A549 (cell line): ENCODE measurements at regions of chr20 and their contacts with region 1.

Region 1: DNA sequence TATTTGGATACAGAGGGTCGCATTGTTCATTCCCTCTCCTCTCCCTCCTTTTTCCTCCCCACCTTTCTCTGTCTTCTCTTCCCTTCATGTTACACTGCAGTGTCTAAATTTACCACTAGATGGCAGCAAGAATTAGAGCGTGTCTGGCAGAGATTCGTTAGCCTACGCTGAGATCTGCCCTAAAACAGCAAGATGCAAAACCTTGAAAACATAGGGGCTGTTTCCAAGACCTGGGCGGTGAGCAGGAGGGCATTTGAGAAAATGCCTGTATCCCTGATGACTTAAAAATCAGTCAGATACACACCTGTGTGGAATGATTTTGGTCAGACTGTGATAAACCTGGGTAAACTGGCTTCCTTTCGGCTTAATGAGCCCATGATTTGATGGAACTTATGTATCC is 101.5 kb upstream of the ISM1 start:
- DNase-seq: peak; percentile 29 to 70
- ATAC-seq: peak; percentile 86 to 97
- H3K4me3 ChIP-seq: no peak overlapping the region
- H3K27ac ChIP-seq: no peak overlapping the region
- H3K4me1 ChIP-seq: no peaks in the 10 kb centered on the region
- CTCF ChIP-seq: peak; percentile 94
- EP300 ChIP-seq: no peak
- POLR2A ChIP-seq: no peak
- RAD21 ChIP-seq: peak; percentile 95 to 98

Region 2: GRCh38 chr20:12815231-12815768 is 304.3 kb before region 1 on chr20:
- CTCF ChIA-PET with region 1: no interaction called
- POLR2A ChIA-PET with region 1: no interaction called
- DNase-seq: no peak
- ATAC-seq: no peak
- H3K4me3 ChIP-seq: no peak overlapping the region
- H3K27ac ChIP-seq: no peak overlapping the region
- H3K4me1 ChIP-seq: no peaks in the 10 kb centered on the region
- CTCF ChIP-seq: no peak
- EP300 ChIP-seq: no peak
- POLR2A ChIP-seq: no peak
- RAD21 ChIP-seq: no peak

Region 3: DNA sequence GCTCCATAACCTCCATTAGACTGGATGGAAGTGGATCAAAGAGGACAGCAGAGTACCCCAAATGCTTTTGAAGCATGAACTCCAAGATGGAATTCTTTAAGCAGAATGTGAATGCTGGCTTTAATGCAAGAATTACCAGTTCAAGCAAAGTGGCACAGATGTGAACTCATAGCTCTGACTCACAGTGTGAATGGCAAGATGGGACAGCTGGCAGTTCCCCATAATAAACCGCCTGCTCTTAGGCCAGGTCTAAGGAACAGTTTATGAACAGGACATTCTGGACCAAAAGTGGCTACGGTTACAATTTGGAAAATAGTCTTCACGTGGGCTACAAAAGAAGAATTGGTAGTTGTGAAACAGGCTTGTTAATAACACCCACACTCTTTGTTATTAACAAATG is 34.3 kb before region 1 on chr20:
- CTCF ChIA-PET with region 1: no interaction called
- POLR2A ChIA-PET with region 1: no interaction called
- DNase-seq: no peak
- ATAC-seq: no peak
- H3K4me3 ChIP-seq: no peak overlapping the region
- H3K27ac ChIP-seq: no peak overlapping the region
- H3K4me1 ChIP-seq: no peaks in the 10 kb centered on the region
- CTCF ChIP-seq: no peak
- EP300 ChIP-seq: no peak
- POLR2A ChIP-seq: no peak
- RAD21 ChIP-seq: no peak

Region 4: GRCh38 chr20:13261460-13262301 is 142.1 kb after region 1 on chr20:
- CTCF ChIA-PET with region 1: interaction called, 11 read pairs
- POLR2A ChIA-PET with region 1: no interaction called
- DNase-seq: peak; percentile 62 to 75
- ATAC-seq: peak; percentile 94 to 99
- H3K4me3 ChIP-seq: no peak overlapping the region
- H3K27ac ChIP-seq: no peak overlapping the region
- H3K4me1 ChIP-seq: peaks cover 14% of the 10 kb centered on the region; the same call in 2 of the 3 replicates
- CTCF ChIP-seq: peak; percentile 74
- EP300 ChIP-seq: no peak
- POLR2A ChIP-seq: no peak
- RAD21 ChIP-seq: peak; percentile 69 to 72

Region 5: GRCh38 chr20:13302647-13303450 is 183.3 kb after region 1 on chr20:
- CTCF ChIA-PET with region 1: interaction called, 11 read pairs
- POLR2A ChIA-PET with region 1: no interaction called
- DNase-seq: peak; percentile 44 to 55
- ATAC-seq: peak; percentile 91 to 98
- H3K4me3 ChIP-seq: no peak overlapping the region
- H3K27ac ChIP-seq: no peak overlapping the region
- H3K4me1 ChIP-seq: no peaks in the 10 kb centered on the region
- CTCF ChIP-seq: peak; percentile 53
- EP300 ChIP-seq: no peak
- POLR2A ChIP-seq: no peak
- RAD21 ChIP-seq: peak; percentile 58 to 70

Region 6: DNA sequence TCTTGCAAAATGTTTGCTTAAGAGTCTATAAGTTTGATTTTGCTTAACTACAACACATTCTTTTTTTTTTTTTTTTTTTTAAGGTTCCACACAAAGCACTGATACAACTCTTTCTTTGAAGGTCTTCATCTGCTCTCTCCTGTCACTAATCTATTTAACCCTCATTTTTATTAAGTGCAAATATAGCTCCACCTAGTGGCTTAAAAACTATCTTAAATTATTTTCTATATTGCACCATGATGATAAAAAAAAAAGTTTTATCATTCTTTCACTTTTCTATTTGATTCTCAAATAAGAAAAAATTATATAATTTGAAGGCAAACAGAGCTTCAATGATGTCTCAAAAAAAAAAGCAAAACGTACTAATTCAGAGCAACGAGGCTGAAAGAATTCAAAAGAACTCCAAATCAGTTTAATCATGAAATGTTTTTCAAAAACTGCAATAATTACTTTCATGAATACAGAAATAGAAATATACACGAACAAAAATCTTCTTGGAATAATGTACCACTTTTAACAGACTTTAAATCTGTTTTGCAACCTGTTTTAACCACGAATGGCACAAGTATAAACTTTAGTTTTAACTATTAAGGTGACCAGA is 652.4 kb after region 1 on chr20:
- CTCF ChIA-PET with region 1: interaction called, 11 read pairs
- POLR2A ChIA-PET with region 1: no interaction called
- DNase-seq: peak; percentile 25 to 36
- ATAC-seq: peak in 1 of 2 experiments; percentile 61; a peak in 3 of 6 replicates
- H3K4me3 ChIP-seq: no peak overlapping the region
- H3K27ac ChIP-seq: no peak overlapping the region
- H3K4me1 ChIP-seq: no peaks in the 10 kb centered on the region
- CTCF ChIP-seq: peak; percentile 64; the same call in 2 of the 3 replicates
- EP300 ChIP-seq: no peak
- POLR2A ChIP-seq: no peak
- RAD21 ChIP-seq: peak; percentile 56 to 65

Region 7: GRCh38 chr20:13784893-13785715 is 665.5 kb after region 1 on chr20 and contains the starts of genes ESF1 and NDUFAF5:
- CTCF ChIA-PET with region 1: interaction called, 10 read pairs
- POLR2A ChIA-PET with region 1: no interaction called
- DNase-seq: peak; percentile 97 to 99
- ATAC-seq: peak; percentile 95 to 98
- H3K4me3 ChIP-seq: peak within 1 kb of the TSS; percentile 93
- H3K27ac ChIP-seq: peak within 1 kb of the TSS; percentile 86 to 94
- H3K4me1 ChIP-seq: peaks cover 29% of the 10 kb centered on the region
- CTCF ChIP-seq: no peak
- EP300 ChIP-seq: no peak
- POLR2A ChIP-seq: peak; percentile 94
- RAD21 ChIP-seq: no peak
- polyA plus RNA-seq, gene ESF1: 12.2 and 30.5 TPM in 2 replicates
- polyA plus RNA-seq, gene NDUFAF5: 36.6 and 53.5 TPM in 2 replicates